CD4-positive, alpha-beta T cell (primary cell): ENCODE measurements at regions of chr18 and their contacts with region 1.

Region 1: DNA sequence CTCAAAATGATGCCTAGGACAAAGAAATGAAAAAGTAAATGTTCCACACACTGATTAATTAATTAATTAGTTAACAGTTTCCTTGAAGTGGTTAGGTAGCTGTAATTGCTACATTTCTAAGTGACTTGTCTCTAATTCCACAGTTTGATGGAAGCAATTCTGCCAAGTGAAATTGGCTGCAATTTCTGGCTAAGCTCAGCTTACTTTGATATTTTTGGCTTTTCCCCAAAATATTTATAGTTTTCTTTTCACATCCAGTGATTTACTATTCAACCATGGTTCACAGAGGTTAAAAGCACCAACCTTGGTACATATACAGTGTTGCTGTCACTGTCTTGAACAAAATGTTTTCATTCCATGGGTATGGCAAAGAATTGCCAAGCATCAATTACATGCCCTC is 459.5 kb upstream of the CDH20 start:
- DNase-seq: no peak
- ATAC-seq: no peak
- H3K4me3 ChIP-seq: no peak overlapping the region
- H3K4me3 Mint-ChIP-seq: no peak overlapping the region
- H3K27ac ChIP-seq: no peak overlapping the region
- H3K27ac Mint-ChIP-seq: no peak overlapping the region
- H3K4me1 ChIP-seq: no peaks in the 10 kb centered on the region
- H3K4me1 Mint-ChIP-seq: no peaks in the 10 kb centered on the region
- H3K27me3 ChIP-seq: no peaks in the 10 kb centered on the region
- H3K27me3 Mint-ChIP-seq: no peaks in the 10 kb centered on the region
- CTCF ChIP-seq: no peak

Region 2: DNA sequence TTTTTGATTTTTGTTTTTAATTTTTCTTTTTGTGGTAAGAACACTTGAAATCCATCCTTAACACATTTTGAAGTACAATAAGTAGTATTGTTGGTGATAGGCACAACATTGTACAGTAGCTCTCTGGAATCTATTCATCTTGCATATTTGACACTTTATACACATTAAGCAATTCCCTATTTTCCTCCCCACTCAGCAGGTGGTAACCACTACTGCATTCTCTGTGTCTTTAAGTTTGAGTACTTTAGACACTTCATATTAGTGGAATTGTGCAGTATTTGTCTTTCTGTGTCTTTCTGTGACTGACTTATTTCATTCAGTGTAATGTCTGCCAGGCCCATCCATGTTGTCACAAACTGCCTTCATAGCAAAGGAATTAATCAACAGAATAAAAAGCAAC is 12.1 kb before region 1 on chr18:
- CTCF ChIA-PET with region 1: no interaction called
- POLR2A ChIA-PET with region 1: no interaction called
- intact Hi-C with region 1: no loop called
- DNase-seq: no peak
- ATAC-seq: no peak
- H3K4me3 ChIP-seq: no peak overlapping the region
- H3K4me3 Mint-ChIP-seq: no peak overlapping the region
- H3K27ac ChIP-seq: no peak overlapping the region
- H3K27ac Mint-ChIP-seq: no peak overlapping the region
- H3K4me1 ChIP-seq: no peaks in the 10 kb centered on the region
- H3K4me1 Mint-ChIP-seq: no peaks in the 10 kb centered on the region
- H3K27me3 ChIP-seq: no peaks in the 10 kb centered on the region
- H3K27me3 Mint-ChIP-seq: no peaks in the 10 kb centered on the region
- CTCF ChIP-seq: no peak

Region 3: DNA sequence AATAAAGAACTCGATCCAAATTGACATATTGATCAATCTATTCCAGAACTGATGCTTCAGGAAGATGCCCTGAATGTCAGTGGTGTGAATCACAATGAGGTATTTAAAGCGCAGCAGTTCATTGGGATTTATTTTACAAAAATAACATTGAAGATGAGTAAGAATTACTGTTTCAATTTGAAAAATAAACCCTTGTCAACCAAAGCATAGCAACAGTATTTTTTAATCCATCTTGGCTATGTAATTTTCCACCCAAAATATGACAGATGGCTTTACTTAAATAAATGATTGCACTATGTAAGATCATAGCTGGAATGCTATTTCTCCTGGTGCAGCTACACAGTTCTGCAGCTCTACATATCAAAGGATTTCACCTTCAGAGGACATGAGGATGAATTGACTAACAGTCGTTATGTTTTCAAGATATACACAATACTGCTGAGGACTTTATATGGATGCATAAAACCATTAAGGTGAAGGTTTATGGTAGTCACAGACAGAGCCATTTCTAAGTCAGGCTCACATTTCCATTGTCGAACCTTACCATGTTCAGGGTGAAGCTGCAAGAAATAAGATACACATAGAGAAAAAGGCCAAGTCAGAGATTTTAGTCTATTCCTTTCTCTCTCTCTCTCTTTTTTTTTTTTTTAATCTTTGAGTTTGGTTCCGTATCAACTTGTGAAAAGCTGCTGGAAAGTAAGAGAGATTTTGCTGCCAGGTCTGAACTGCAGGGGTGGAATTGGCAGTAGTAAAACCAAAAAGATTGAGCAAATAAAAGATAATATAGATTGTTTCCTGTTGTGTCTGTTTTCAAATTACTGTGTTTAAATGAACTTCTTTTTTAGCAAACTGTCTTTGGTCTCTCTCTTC is 61.6 kb after region 1 on chr18:
- CTCF ChIA-PET with region 1: no interaction called
- POLR2A ChIA-PET with region 1: no interaction called
- intact Hi-C with region 1: loop called in 1 of 2 experiments (anchors 10 kb)
- DNase-seq: no peak
- ATAC-seq: no peak
- H3K4me3 ChIP-seq: no peak overlapping the region
- H3K4me3 Mint-ChIP-seq: no peak overlapping the region
- H3K27ac ChIP-seq: no peak overlapping the region
- H3K27ac Mint-ChIP-seq: no peak overlapping the region
- H3K4me1 ChIP-seq: no peaks in the 10 kb centered on the region
- H3K4me1 Mint-ChIP-seq: no peaks in the 10 kb centered on the region
- H3K27me3 ChIP-seq: no peaks in the 10 kb centered on the region
- H3K27me3 Mint-ChIP-seq: no peaks in the 10 kb centered on the region
- CTCF ChIP-seq: no peak